Activated T-helper 1 cell treated with anti-CD3 and anti-CD28 coated beads, Interleukin-12 subunit alpha, Interleukin-12 subunit beta, Interleukin-2, Interleukin-4 antibody, amounts not matched to agents 30 ng/mL and 10 ng/mL and 1 ng/mL, durations not matched to agents 14 hours and 24 hours and 36 hours (primary cell): ENCODE measurements at regions of chr10 and their contacts with region 1.

Region 1: GRCh38 chr10:6401562-6402348 is 178.3 kb downstream of the PRKCQ start:
- DNase-seq: peak; percentile 52
- H3K4me3 Mint-ChIP-seq: peak overlapping the region; percentile 0
- H3K27ac Mint-ChIP-seq: no peak overlapping the region
- H3K4me1 Mint-ChIP-seq: peaks cover 25% of the 10 kb centered on the region
- H3K27me3 Mint-ChIP-seq: peaks cover 4% of the 10 kb centered on the region

Region 2: GRCh38 chr10:6108603-6109443 is 292.9 kb before region 1 on chr10:
- intact Hi-C with region 1: loop called (anchors 1 kb)
- DNase-seq: peak; percentile 22
- H3K4me3 Mint-ChIP-seq: no peak overlapping the region
- H3K27ac Mint-ChIP-seq: peak overlapping the region; percentile 59
- H3K4me1 Mint-ChIP-seq: peaks cover 56% of the 10 kb centered on the region
- H3K27me3 Mint-ChIP-seq: no peaks in the 10 kb centered on the region

Region 3: GRCh38 chr10:6171881-6172695 is 229.7 kb before region 1 on chr10:
- intact Hi-C with region 1: loop called (anchors 1 kb)
- DNase-seq: peak; percentile 16
- H3K4me3 Mint-ChIP-seq: peak overlapping the region; percentile 66
- H3K27ac Mint-ChIP-seq: peak overlapping the region; percentile 79
- H3K4me1 Mint-ChIP-seq: peaks cover 85% of the 10 kb centered on the region
- H3K27me3 Mint-ChIP-seq: no peaks in the 10 kb centered on the region

Region 4: GRCh38 chr10:6269953-6270867 is 131.5 kb before region 1 on chr10:
- intact Hi-C with region 1: loop called (anchors 1 kb)
- DNase-seq: peak; percentile 72
- H3K4me3 Mint-ChIP-seq: peak overlapping the region; percentile 55
- H3K27ac Mint-ChIP-seq: peak overlapping the region; percentile 97
- H3K4me1 Mint-ChIP-seq: peaks cover 80% of the 10 kb centered on the region
- H3K27me3 Mint-ChIP-seq: no peaks in the 10 kb centered on the region

Region 5: DNA sequence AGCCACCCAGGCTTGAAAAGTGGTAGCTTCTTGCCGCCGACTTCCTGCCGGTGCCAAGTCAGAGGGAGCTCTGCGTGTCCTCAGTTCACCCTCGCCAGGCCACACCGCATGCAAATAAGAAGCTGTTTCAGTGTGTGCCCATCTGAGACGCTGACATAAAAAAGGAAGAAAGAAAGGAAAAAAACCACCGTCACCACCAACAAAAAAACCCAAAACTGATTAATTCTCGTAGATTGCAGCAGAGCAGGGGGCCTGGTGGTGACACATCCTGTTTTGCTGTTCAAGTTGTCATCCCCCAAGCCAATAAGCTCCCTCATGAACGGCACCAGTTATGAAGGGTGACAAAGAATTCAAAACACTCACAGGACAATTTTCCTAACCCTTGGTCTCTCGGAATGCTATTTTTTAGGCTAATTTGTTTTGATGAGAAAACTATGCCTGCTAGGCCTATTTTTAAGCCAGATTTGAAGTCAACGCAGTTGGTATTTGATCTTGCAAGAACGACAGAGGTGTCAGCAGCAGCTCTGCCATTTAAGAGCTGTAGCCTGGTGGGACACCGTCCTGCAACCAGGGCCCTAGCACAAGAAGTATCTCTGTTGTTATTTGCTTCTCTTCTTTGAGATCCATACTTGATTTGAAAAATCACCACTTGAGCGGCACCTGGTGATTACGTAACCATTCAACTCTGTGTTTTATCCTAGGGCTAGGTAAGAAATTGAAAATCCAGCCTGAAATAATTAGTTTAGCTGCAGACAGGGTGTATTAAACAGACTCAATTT is 53.5 kb before region 1 on chr10:
- intact Hi-C with region 1: loop called (anchors 1 kb)
- DNase-seq: peak; percentile 62
- H3K4me3 Mint-ChIP-seq: peak overlapping the region; percentile 74
- H3K27ac Mint-ChIP-seq: peak overlapping the region; percentile 96
- H3K4me1 Mint-ChIP-seq: peaks cover 50% of the 10 kb centered on the region
- H3K27me3 Mint-ChIP-seq: no peaks in the 10 kb centered on the region